CD4-positive, alpha-beta T cell (primary cell): ENCODE measurements at regions of chr19 and their contacts with region 1.

Region 1: DNA sequence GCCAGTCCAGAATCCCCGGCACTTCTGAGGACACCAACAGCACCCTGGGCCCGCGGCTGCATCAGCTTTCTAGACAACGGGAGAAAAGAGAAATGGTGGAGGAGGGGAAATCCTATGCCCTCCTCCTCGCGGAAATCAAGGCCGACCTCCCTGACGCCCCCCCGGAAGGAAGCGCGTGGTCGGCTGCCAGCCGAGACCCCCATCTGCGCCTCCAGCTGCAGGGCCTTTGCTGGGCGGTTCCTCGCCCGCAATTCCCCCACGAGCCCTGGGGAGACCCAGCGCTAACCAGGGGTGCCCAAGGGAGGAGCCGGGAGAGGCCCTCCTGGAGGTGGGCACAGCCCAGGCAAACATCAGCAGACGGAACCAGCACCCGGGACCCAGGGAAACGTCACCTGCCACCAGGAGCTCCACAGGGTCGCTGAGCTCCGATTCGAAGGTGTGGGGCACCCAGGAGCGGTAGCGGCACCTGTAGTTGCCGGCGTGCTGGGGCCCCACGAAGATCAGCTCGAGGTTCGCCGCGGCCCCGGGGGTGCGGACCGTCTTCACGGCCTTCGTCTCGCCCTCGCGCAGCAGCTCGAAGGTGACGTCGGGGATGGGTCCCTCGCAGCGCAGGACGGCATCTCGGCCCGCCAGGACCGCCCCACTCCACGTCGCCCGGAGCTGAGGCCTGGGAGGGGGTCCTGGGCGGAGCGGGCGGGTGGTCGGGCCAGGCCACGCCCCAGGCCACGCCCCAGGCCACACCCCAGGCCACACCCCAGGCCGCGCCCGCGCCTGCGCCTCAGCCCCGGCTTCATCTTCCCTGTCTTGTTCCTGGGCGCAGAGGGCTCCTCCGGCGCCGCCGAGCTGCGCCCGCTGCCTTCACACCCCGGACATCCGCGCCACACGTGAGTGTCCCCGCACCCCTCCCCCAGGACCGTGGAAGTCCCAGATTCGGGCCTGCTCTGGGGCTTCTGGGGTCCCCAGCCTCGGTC is 6.0 kb downstream of the A1BG start:
- DNase-seq: peak; percentile 33 to 86 (median 62)
- ATAC-seq: peak; percentile 89
- H3K4me3 ChIP-seq: peak overlapping the region; percentile 63
- H3K4me3 Mint-ChIP-seq: peak overlapping the region; percentile 86
- H3K27ac ChIP-seq: peak overlapping the region; percentile 47 to 59
- H3K27ac Mint-ChIP-seq: peak overlapping the region; percentile 84
- H3K4me1 ChIP-seq: peaks cover 21% of the 10 kb centered on the region
- H3K4me1 Mint-ChIP-seq: peaks cover 22% of the 10 kb centered on the region
- H3K27me3 ChIP-seq: peaks cover 0 to 2% of the 10 kb centered on the region in 2 experiments
- H3K27me3 Mint-ChIP-seq: peaks cover 15% of the 10 kb centered on the region
- CTCF ChIP-seq: no peak

Region 2: GRCh38 chr19:58326914-58327726 is 20.1 kb before region 1 on chr19 and contains the start of gene ZSCAN22:
- CTCF ChIA-PET with region 1: no interaction called
- POLR2A ChIA-PET with region 1: no interaction called
- intact Hi-C with region 1: no loop called
- DNase-seq: peak; percentile 76 to 94 (median 86)
- ATAC-seq: peak; percentile 88
- H3K4me3 ChIP-seq: peak within 1 kb of the TSS; percentile 86
- H3K4me3 Mint-ChIP-seq: no peak within 1 kb of the TSS
- H3K27ac ChIP-seq: peak within 1 kb of the TSS; percentile 65
- H3K27ac Mint-ChIP-seq: no peak within 1 kb of the TSS
- H3K4me1 ChIP-seq: peaks cover 22% of the 10 kb centered on the region
- H3K4me1 Mint-ChIP-seq: peaks cover 4% of the 10 kb centered on the region
- H3K27me3 ChIP-seq: no peaks in the 10 kb centered on the region
- H3K27me3 Mint-ChIP-seq: no peaks in the 10 kb centered on the region
- CTCF ChIP-seq: no peak
- total RNA-seq, gene ZSCAN22: 0.77 to 0.81 TPM

Region 3: DNA sequence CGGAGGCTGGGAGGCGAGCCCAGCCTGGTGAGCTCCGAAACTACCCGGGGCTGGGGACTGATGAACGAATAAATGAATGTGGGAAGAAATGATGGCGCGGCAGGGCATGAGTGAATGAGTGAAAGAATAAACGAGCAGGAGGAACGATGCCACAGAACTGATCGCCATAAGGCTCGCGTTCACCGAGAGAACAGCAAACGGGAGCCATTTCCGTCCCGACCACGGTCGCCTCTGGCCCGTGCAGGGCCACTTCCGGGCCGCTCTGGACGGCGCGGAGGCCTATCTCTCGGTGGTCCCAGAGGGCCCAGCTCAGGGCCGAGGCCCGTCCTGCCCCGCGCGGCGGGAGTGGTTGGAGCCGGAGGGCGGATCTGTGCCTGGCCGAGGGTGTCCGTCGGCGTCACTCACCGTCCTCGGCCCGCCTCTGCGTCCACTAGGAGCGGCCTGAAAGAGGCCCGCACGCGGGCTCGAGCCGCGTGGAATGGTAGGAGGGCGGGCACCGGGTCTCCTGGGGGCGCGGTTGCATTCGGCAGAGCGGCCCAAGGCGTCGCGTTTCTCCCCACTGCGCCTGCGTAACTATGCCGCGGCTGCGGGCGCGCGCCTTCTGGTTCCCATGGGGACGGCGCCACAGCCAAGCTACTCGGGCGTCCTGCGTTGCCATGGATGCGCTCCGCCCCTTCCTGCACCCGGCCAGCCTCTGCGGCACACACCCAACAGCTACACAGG is 15.2 kb after region 1 on chr19 and contains the start of gene ZNF497:
- CTCF ChIA-PET with region 1: interaction called, 6 read pairs
- POLR2A ChIA-PET with region 1: interaction called, 22 read pairs
- intact Hi-C with region 1: no loop called
- DNase-seq: peak; percentile 92 to 99 (median 97)
- ATAC-seq: peak; percentile 90
- H3K4me3 ChIP-seq: peak within 1 kb of the TSS; percentile 84
- H3K4me3 Mint-ChIP-seq: peak within 1 kb of the TSS; percentile 94
- H3K27ac ChIP-seq: peak within 1 kb of the TSS; percentile 58 to 69
- H3K27ac Mint-ChIP-seq: peak within 1 kb of the TSS; percentile 84
- H3K4me1 ChIP-seq: peaks cover 22% of the 10 kb centered on the region
- H3K4me1 Mint-ChIP-seq: peaks cover 12% of the 10 kb centered on the region
- H3K27me3 ChIP-seq: no peaks in the 10 kb centered on the region
- H3K27me3 Mint-ChIP-seq: no peaks in the 10 kb centered on the region
- CTCF ChIP-seq: no peak
- total RNA-seq, gene ZNF497: 0.28 to 0.55 TPM